Naive thymus-derived CD4-positive, alpha-beta T cell (primary cell): ENCODE measurements at regions of chr9 and their contacts with region 1.

Region 1: GRCh38 chr9:132160802-132161742 is 786 bp upstream of the NTNG2 start:
- DNase-seq: peak in 8 of 9 donors; percentile 21 to 54 (median 25)
- ATAC-seq: peak; percentile 83
- H3K4me3 ChIP-seq: peak overlapping the region; percentile 64
- H3K4me3 Mint-ChIP-seq: peak overlapping the region; percentile 90 to 100 (median 94)
- H3K27ac ChIP-seq: no peak overlapping the region
- H3K27ac Mint-ChIP-seq: peak overlapping the region in 7 of 9 donors; percentile 41 to 87 (median 72)
- H3K4me1 ChIP-seq: peaks cover 6% of the 10 kb centered on the region in 2 donors
- H3K4me1 Mint-ChIP-seq: peaks cover 6 to 17% (median 9%) of the 10 kb centered on the region in 7 donors
- H3K27me3 ChIP-seq: peaks cover 0 to 16% of the 10 kb centered on the region in 2 donors
- H3K27me3 Mint-ChIP-seq: peaks cover 37 to 66% (median 47%) of the 10 kb centered on the region in 5 donors

Region 2: GRCh38 chr9:131755541-131756198 is 405.4 kb before region 1 on chr9:
- CTCF ChIA-PET with region 1: no interaction called
- POLR2A ChIA-PET with region 1: no interaction called
- intact Hi-C with region 1: loop called in 1 of 2 experiments (anchors 2 kb)
- DNase-seq: peak; percentile 67 to 84 (median 80)
- ATAC-seq: peak; percentile 100
- H3K4me3 ChIP-seq: no peak overlapping the region
- H3K4me3 Mint-ChIP-seq: peak overlapping the region in 6 of 10 donors; percentile 1 to 68 (median 33)
- H3K27ac ChIP-seq: no peak overlapping the region
- H3K27ac Mint-ChIP-seq: peak overlapping the region in 5 of 9 donors; percentile 7 to 65 (median 23)
- H3K4me1 ChIP-seq: peaks cover 0 to 4% of the 10 kb centered on the region in 2 donors
- H3K4me1 Mint-ChIP-seq: peaks cover 5 to 7% (median 6%) of the 10 kb centered on the region in 7 donors
- H3K27me3 ChIP-seq: no peaks in the 10 kb centered on the region
- H3K27me3 Mint-ChIP-seq: peaks cover 0 to 28% (median 0%) of the 10 kb centered on the region in 5 donors

Region 3: DNA sequence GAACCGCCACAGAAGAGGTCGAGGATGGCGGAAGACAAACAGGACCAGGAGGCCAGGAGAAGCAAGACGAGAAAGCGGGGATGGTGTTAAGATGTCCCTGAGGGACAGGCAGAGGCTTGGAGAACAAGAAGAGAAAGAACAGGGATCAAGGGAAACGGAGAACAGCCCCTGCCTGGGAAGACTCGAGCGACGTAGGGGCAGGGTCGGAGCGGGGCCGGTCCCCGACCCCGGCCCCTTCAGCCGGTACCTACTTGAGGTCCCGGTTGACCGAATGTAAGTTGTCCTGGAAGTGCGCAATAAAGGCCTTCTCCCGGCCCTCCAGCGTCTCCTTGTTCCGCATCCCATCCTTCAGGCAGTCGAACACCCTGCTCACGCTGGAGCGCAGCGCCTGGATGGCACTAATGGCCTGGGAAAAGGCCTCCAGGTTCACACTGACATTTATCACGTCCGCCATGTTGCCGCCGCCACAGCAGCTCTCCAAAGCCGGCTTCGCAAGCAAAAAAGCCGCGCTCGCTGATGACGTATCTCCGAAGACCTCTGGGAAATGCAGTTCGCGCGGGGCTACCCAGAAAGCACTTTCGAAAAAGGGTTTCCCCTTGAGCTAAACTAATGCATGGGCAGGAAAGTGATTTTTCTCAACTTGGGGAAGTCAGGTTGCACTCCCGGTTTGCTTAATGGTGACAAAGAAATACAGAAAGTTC is 81.5 kb before region 1 on chr9 and contains the start of gene MED27:
- CTCF ChIA-PET with region 1: no interaction called
- POLR2A ChIA-PET with region 1: no interaction called
- intact Hi-C with region 1: loop called (anchors 1 to 5 kb)
- DNase-seq: peak; percentile 79 to 94 (median 90)
- ATAC-seq: peak; percentile 98
- H3K4me3 ChIP-seq: peak within 1 kb of the TSS; percentile 77
- H3K4me3 Mint-ChIP-seq: peak within 1 kb of the TSS; percentile 93 to 99 (median 98)
- H3K27ac ChIP-seq: peak within 1 kb of the TSS; percentile 72
- H3K27ac Mint-ChIP-seq: peak within 1 kb of the TSS; percentile 69 to 96 (median 92)
- H3K4me1 ChIP-seq: peaks cover 13 to 15% of the 10 kb centered on the region in 2 donors
- H3K4me1 Mint-ChIP-seq: peaks cover 31 to 53% (median 49%) of the 10 kb centered on the region in 7 donors
- H3K27me3 ChIP-seq: no peaks in the 10 kb centered on the region
- H3K27me3 Mint-ChIP-seq: peaks cover 0 to 7% (median 4%) of the 10 kb centered on the region in 5 donors
- total RNA-seq, gene MED27: 11.5 to 26.9 (median 21.3) TPM